Sigmoid colon (tissue), 7 donors: ENCODE measurements at regions of chr1 and their contacts with region 1.

Region 1: GRCh38 chr1:231603598-231604275 is 22.9 kb upstream of the DISC1 start:
- DNase-seq: no peak
- H3K4me3 ChIP-seq: peak overlapping the region; percentile 32 to 47 (median 42)
- H3K27ac ChIP-seq: peak overlapping the region in 3 of 4 donors; percentile 15 to 65 (median 22)
- H3K4me1 ChIP-seq: peaks cover 0 to 35% (median 33%) of the 10 kb centered on the region in 4 donors
- H3K27me3 ChIP-seq: no peaks in the 10 kb centered on the region
- CTCF ChIP-seq: peak; percentile 35 to 78 (median 60)
- EP300 ChIP-seq: no peak
- POLR2A ChIP-seq: no peak

Region 2: GRCh38 chr1:231337472-231338269 is 266.1 kb before region 1 on chr1 and contains the start of gene EXOC8:
- intact Hi-C with region 1: loop called (anchors 5 kb)
- DNase-seq: peak; percentile 97
- H3K4me3 ChIP-seq: peak within 1 kb of the TSS; percentile 69 to 94 (median 81)
- H3K27ac ChIP-seq: peak within 1 kb of the TSS; percentile 88 to 96 (median 92)
- H3K4me1 ChIP-seq: peaks cover 0 to 60% (median 52%) of the 10 kb centered on the region in 4 donors
- H3K27me3 ChIP-seq: no peaks in the 10 kb centered on the region
- CTCF ChIP-seq: no peak
- EP300 ChIP-seq: no peak
- POLR2A ChIP-seq: peak; percentile 86 to 87
- total RNA-seq, gene EXOC8: 9.5 to 11.7 (median 11.3) TPM

Region 3: GRCh38 chr1:231357831-231358354 is 245.8 kb before region 1 on chr1:
- intact Hi-C with region 1: loop called (anchors 2 kb)
- DNase-seq: peak; percentile 75
- H3K4me3 ChIP-seq: no peak overlapping the region
- H3K27ac ChIP-seq: peak overlapping the region in 3 of 4 donors; percentile 4 to 43 (median 33)
- H3K4me1 ChIP-seq: peaks cover 0 to 14% (median 8%) of the 10 kb centered on the region in 4 donors
- H3K27me3 ChIP-seq: no peaks in the 10 kb centered on the region
- CTCF ChIP-seq: peak; percentile 68 to 82 (median 71)
- EP300 ChIP-seq: no peak
- POLR2A ChIP-seq: no peak

Region 4: GRCh38 chr1:231643071-231643934 is 39.6 kb after region 1 on chr1:
- intact Hi-C with region 1: no loop called
- DNase-seq: no peak
- H3K4me3 ChIP-seq: no peak overlapping the region
- H3K27ac ChIP-seq: peak overlapping the region in 1 of 4 donors; percentile 50
- H3K4me1 ChIP-seq: peaks cover 0 to 6% (median 2%) of the 10 kb centered on the region in 4 donors
- H3K27me3 ChIP-seq: no peaks in the 10 kb centered on the region
- CTCF ChIP-seq: no peak
- EP300 ChIP-seq: no peak
- POLR2A ChIP-seq: no peak